ENCODE measurements at regions of chr2 and their contacts with region 1.

Region 1: DNA sequence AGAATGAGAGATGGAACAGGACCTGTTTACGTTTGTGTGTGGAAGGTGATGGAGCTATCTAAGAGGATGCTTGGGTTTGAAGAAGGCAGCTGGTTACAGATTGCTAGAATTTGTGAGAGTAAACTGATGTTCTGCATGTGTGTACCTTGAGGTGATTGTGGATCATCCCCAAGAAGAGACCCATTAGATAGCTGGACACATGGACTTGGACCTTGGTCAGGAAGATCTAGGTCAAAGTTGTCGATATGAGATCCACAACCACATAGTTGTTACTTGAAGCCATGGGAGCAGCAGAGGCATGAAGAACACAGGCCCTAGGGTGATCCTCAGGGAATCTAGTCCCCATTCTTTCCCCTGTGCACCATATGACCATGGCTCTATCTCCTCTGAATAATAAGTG is 101.0 kb downstream of the PKP4 start:
- DNase-seq: no peak
- ATAC-seq: no peak
- H3K4me3 ChIP-seq: no peak overlapping the region
- H3K27ac ChIP-seq: no peak overlapping the region
- H3K4me1 ChIP-seq: no peaks in the 10 kb centered on the region
- H3K27me3 ChIP-seq: no peaks in the 10 kb centered on the region
- CTCF ChIP-seq: no peak

Region 2: GRCh38 chr2:157743051-157743450 is 814.7 kb before region 1 on chr2:
- CTCF ChIA-PET with region 1: no interaction called
- POLR2A ChIA-PET with region 1: no interaction called
- in situ Hi-C with region 1: no loop called
- intact Hi-C with region 1: no loop called
- DNase-seq: no peak
- ATAC-seq: no peak
- H3K4me3 ChIP-seq: no peak overlapping the region
- H3K27ac ChIP-seq: no peak overlapping the region
- H3K4me1 ChIP-seq: no peaks in the 10 kb centered on the region
- H3K27me3 ChIP-seq: no peaks in the 10 kb centered on the region
- CTCF ChIP-seq: no peak

Region 3: DNA sequence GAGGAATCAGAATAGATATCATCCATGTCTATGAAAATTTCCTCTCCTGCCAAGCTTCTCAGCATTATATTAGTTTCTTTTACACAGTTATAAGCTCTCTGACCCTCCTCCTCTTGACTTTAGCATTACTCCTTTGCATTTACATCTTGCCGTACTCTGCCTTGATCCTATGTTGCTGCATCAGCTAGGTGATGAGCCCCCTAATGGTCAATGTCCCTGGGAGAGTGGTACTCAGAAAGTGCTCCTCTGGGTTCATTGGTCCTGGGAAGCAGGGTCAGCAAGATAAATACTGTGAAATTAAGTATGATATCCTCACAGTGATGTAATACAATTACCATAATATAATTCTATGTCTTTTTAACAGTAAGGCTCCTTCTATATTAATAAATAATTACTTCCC is 26.9 kb before region 1 on chr2:
- CTCF ChIA-PET with region 1: interaction called, 12 read pairs
- POLR2A ChIA-PET with region 1: no interaction called
- in situ Hi-C with region 1: no loop called
- intact Hi-C with region 1: no loop called
- DNase-seq: no peak
- ATAC-seq: no peak
- H3K4me3 ChIP-seq: no peak overlapping the region
- H3K27ac ChIP-seq: no peak overlapping the region
- H3K4me1 ChIP-seq: no peaks in the 10 kb centered on the region
- H3K27me3 ChIP-seq: no peaks in the 10 kb centered on the region
- CTCF ChIP-seq: peak; percentile 36

Region 4: GRCh38 chr2:158542577-158542976 is 15.2 kb before region 1 on chr2:
- CTCF ChIA-PET with region 1: no interaction called
- POLR2A ChIA-PET with region 1: no interaction called
- in situ Hi-C with region 1: no loop called
- intact Hi-C with region 1: no loop called
- DNase-seq: no peak
- ATAC-seq: no peak
- H3K4me3 ChIP-seq: no peak overlapping the region
- H3K27ac ChIP-seq: no peak overlapping the region
- H3K4me1 ChIP-seq: peaks cover 16% of the 10 kb centered on the region; the same call in 1 of the 2 replicates
- H3K27me3 ChIP-seq: no peaks in the 10 kb centered on the region
- CTCF ChIP-seq: no peak

Measured in Panc1 (cell line).